Activated CD8-positive, alpha-beta T cell treated with anti-CD3 and anti-CD28 coated beads for 36 hours (primary cell): ENCODE measurements at regions of chr4 and their contacts with region 1.

Region 1: GRCh38 chr4:14920759-14921320 is 81.4 kb upstream of the CPEB2 start:
- DNase-seq: peak; percentile 37
- ATAC-seq: peak; percentile 50
- H3K4me3 Mint-ChIP-seq: no peak overlapping the region
- H3K27ac Mint-ChIP-seq: no peak overlapping the region
- H3K4me1 Mint-ChIP-seq: no peaks in the 10 kb centered on the region
- H3K27me3 Mint-ChIP-seq: peaks cover 4% of the 10 kb centered on the region
- CTCF ChIP-seq: no peak

Region 2: GRCh38 chr4:14856076-14856933 is 64.5 kb before region 1 on chr4:
- CTCF ChIA-PET with region 1: no interaction called
- POLR2A ChIA-PET with region 1: interaction called, 4 read pairs
- intact Hi-C with region 1: loop called (anchors 5 kb)
- DNase-seq: peak; percentile 87
- ATAC-seq: peak; percentile 94
- H3K4me3 Mint-ChIP-seq: no peak overlapping the region
- H3K27ac Mint-ChIP-seq: peak overlapping the region; percentile 86
- H3K4me1 Mint-ChIP-seq: peaks cover 26% of the 10 kb centered on the region
- H3K27me3 Mint-ChIP-seq: peaks cover 22% of the 10 kb centered on the region
- CTCF ChIP-seq: no peak

Region 3: DNA sequence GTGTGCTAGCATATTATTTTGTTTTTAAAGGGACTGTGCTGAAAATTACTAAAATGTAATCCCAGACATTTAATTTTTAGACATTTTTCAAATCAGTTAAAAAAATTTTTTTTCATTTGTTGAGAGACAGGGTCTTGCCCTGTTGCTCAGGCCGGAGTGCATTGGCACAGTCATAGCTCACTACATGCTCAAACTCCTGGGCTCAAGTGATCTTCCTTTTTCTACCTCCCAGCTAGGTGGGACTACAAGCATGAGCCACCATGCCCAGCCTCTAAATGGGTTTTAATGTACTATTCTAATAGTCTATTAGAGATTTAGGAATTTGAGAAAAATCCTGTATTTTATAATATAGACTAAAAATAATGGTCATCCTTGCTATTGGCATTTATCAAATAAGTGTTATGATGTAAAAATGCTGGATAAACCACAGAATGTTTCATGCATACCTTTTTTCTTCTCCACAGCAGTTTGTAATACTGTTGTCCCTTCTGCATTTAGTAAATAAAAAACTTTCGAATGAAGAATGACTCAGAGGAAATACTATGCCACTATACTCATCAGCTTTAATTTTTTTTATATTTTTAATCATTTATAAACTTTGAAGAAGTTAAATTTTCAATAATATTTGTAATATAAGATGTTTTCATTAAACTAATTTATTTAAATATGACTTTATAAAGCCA is 111.3 kb after region 1 on chr4:
- CTCF ChIA-PET with region 1: no interaction called
- POLR2A ChIA-PET with region 1: no interaction called
- intact Hi-C with region 1: no loop called
- DNase-seq: no peak
- ATAC-seq: no peak
- H3K4me3 Mint-ChIP-seq: no peak overlapping the region
- H3K27ac Mint-ChIP-seq: no peak overlapping the region
- H3K4me1 Mint-ChIP-seq: peaks cover 18% of the 10 kb centered on the region
- H3K27me3 Mint-ChIP-seq: no peaks in the 10 kb centered on the region
- CTCF ChIP-seq: no peak